Heart left ventricle (tissue), 16 donors: ENCODE measurements at regions of chr6 and their contacts with region 1.

Region 1: DNA sequence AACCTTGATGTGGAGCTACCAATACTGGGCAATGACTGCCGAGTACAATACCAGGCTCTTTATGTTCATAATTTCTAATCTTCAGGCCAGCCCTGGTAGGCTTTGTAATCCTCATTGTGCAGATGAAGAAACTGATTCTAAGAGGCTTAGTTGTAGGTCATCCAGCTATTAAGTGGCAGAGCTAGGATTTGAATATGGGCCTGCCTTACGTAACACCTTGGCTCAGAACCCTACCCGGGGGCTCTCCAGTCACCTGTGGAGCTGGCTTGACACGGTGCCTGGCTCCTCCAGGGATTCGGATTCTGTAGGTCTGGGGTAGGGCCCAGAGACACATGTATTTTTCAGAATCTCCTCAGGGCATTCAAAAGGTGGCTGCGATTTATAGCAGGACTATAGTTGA is 515.5 kb downstream of the QKI start:
- DNase-seq: no peak
- ATAC-seq: peak in 1 of 4 donors; percentile 16
- H3K4me3 ChIP-seq: no peak overlapping the region
- H3K27ac ChIP-seq: no peak overlapping the region
- H3K4me1 ChIP-seq: peaks cover 0 to 6% (median 0%) of the 10 kb centered on the region in 12 donors
- H3K27me3 ChIP-seq: no peaks in the 10 kb centered on the region
- CTCF ChIP-seq: no peak
- POLR2A ChIP-seq: no peak

Region 2: GRCh38 chr6:163860287-163861081 is 69.5 kb before region 1 on chr6:
- intact Hi-C with region 1: loop called in 1 of 10 experiments (anchors 5 kb)
- DNase-seq: peak in 1 of 5 donors; percentile 42
- ATAC-seq: peak in 3 of 4 donors; percentile 66 to 73 (median 73)
- H3K4me3 ChIP-seq: peak overlapping the region in 9 of 12 donors; percentile 11 to 42 (median 18)
- H3K27ac ChIP-seq: no peak overlapping the region
- H3K4me1 ChIP-seq: peaks cover 0 to 12% (median 6%) of the 10 kb centered on the region in 12 donors
- H3K27me3 ChIP-seq: no peaks in the 10 kb centered on the region
- CTCF ChIP-seq: no peak
- POLR2A ChIP-seq: no peak

Region 3: DNA sequence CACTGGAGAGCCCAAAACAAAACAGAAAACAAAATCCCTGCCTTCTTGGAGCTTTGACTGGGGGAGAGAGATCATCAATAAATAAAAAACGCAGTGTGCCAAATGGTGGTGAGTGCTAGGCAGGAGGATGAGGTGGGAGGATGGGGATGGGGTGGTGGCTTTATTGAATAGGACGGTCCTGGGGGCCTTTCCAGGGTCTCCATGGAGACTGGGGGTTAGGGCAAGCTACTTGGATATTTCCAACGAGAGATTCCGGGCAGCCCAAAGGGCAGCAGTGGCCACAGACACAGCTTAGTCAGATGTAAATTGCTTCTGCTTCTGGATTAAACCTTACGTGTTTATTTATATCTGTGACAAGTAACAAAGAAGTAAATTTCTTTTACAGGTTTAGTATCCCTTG is 184.6 kb after region 1 on chr6:
- intact Hi-C with region 1: no loop called
- DNase-seq: no peak
- ATAC-seq: no peak
- H3K4me3 ChIP-seq: no peak overlapping the region
- H3K27ac ChIP-seq: no peak overlapping the region
- H3K4me1 ChIP-seq: peaks cover 0 to 13% (median 6%) of the 10 kb centered on the region in 12 donors
- H3K27me3 ChIP-seq: no peaks in the 10 kb centered on the region
- CTCF ChIP-seq: no peak
- POLR2A ChIP-seq: no peak